Activated T-helper 1 cell treated with anti-CD3 and anti-CD28 coated beads, Interleukin-12 subunit alpha, Interleukin-12 subunit beta, Interleukin-2, Interleukin-4 antibody, amounts not matched to agents 30 ng/mL and 10 ng/mL and 1 ng/mL, durations not matched to agents 14 hours and 24 hours and 36 hours (primary cell): ENCODE measurements at regions of chr2 and their contacts with region 1.

Region 1: DNA sequence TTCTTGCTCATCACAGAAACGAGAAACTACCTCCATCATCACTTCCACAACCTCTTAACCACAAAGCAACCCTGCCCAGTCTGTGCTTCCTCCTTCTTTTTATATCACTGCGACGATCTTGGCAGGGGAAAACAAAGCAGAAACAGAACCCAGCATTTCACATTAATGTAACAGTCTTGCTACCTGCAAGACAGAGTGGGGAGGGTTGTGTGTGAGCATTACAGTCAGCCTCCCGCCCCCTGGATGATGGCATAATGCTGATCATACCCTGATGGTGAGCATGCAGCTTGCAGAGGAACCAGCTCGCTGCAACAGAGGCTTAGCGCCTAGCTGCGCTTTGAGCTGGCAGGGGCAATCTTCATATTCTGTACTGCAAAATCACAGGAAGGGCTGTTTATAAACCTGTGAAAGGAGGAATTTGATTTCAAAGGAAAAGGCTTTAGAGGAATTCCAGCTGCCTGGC is 376.1 kb downstream of the IRS1 start:
- DNase-seq: peak; percentile 51
- H3K4me3 Mint-ChIP-seq: peak overlapping the region; percentile 59
- H3K27ac Mint-ChIP-seq: peak overlapping the region; percentile 4
- H3K4me1 Mint-ChIP-seq: peaks cover 21% of the 10 kb centered on the region
- H3K27me3 Mint-ChIP-seq: peaks cover 18% of the 10 kb centered on the region

Region 2: GRCh38 chr2:224952936-224953657 is 1470.4 kb before region 1 on chr2:
- intact Hi-C with region 1: loop called (anchors 10 kb)
- DNase-seq: peak; percentile 34
- H3K4me3 Mint-ChIP-seq: peak overlapping the region; percentile 62
- H3K27ac Mint-ChIP-seq: peak overlapping the region; percentile 87
- H3K4me1 Mint-ChIP-seq: peaks cover 92% of the 10 kb centered on the region
- H3K27me3 Mint-ChIP-seq: no peaks in the 10 kb centered on the region

Region 3: DNA sequence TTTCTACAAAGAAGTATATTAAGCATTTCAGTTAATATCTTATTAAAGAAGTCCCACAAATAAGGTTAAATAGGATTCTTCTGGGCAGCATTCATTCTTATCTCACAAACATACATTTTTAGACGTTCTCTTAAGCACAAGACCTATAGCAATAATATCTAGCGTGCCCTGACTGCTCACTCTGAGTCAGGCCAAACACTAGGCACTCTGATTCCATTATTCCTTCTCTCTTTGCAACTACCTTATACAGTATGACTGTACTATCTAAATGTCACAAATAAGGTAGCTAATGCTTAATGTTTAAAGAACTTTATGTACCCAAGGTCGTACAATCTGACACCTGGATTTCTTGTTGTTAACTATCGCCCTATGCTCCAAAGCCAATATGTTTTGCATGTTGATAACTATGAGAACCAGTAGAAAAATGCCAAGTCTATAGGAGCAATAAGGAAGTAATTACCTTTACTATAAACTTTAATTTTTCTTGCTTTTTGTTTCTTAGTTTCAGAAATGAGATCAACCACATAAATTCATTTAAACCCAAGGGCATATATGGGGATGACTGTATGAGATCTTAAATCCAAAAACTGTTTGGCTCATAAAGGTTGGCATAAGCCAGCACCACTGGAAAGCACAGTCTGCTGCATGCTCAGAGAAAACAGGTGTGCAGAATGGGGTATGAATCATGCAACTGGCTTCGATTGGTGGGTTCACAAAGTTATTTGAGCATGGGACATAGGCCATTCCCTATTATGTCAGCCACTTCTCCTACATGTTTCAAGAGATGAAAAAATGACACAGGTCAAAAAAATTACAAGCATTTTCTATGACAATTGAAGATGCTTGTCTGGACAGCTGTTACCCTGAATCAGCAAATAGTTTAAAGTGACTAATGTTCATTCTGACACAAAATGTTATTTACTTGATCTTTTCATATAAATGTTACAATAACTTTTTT is 24.1 kb after region 1 on chr2:
- intact Hi-C with region 1: no loop called
- DNase-seq: no peak
- H3K4me3 Mint-ChIP-seq: no peak overlapping the region
- H3K27ac Mint-ChIP-seq: no peak overlapping the region
- H3K4me1 Mint-ChIP-seq: no peaks in the 10 kb centered on the region
- H3K27me3 Mint-ChIP-seq: peaks cover 12% of the 10 kb centered on the region

Region 4: DNA sequence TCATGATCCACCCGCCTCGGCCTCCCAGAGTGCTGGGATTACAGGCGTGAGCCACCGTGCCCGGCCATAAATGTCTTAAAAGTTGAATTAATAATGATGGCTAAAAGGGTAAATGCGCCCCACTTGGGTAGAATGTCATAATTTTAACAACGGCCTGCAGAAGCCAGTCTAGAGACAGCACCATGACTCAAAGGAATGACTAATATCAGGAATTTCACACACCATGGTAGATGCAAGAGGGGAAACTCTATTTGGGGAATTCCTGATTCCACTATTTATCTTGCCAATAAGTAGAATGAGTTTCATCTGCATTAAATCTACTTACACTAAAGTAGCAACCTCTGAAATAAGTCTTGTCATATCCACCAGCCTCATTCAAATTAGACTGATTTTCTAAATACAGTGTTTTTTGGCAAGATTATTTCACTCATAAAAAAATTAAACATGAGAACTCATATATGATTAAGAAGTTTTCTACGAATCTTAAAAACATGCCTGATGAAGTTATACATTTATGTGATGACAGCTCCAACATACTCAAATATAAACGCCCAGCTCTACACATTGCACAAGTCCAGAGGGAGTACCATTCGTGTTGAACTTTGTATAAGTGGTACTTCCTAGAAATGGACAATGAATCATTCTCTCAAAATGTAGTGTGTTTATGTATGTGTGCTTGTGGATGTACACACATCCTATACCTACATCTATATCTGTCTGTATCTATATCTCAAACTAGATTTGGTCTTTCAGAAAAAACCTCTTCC is 66.4 kb after region 1 on chr2:
- intact Hi-C with region 1: loop called (anchors 2 kb)
- DNase-seq: no peak
- H3K4me3 Mint-ChIP-seq: no peak overlapping the region
- H3K27ac Mint-ChIP-seq: no peak overlapping the region
- H3K4me1 Mint-ChIP-seq: no peaks in the 10 kb centered on the region
- H3K27me3 Mint-ChIP-seq: peaks cover 4% of the 10 kb centered on the region

Region 5: DNA sequence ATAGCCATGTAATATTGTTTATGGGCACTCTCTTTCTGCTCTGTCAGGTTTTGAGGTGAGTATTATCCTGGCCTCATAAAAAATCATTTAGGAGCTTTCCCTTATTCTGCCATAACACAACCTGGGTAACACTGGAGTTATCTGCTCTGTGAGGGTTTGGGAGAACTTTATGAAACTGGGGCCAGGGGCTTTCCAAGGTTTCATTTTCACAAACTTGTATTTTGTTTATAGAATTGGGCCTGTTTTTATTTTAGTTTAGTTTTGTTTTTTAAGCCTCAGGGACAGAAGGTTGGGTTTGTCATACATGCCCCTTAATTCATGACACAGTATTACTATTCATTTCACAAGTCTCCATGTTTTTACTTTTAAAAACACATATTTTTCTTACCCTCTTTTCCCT is 292.6 kb after region 1 on chr2:
- intact Hi-C with region 1: loop called (anchors 10 kb)
- DNase-seq: no peak
- H3K4me3 Mint-ChIP-seq: no peak overlapping the region
- H3K27ac Mint-ChIP-seq: peak overlapping the region; percentile 51
- H3K4me1 Mint-ChIP-seq: peaks cover 17% of the 10 kb centered on the region
- H3K27me3 Mint-ChIP-seq: peaks cover 20% of the 10 kb centered on the region